ENCODE measurements at regions of chr12 and their contacts with region 1.

Region 1: GRCh38 chr12:114636723-114637483 is 47.1 kb downstream of the TBX3 start:
- DNase-seq: peak in 32 of 42 donors; percentile 7 to 62 (median 28)

Region 2: DNA sequence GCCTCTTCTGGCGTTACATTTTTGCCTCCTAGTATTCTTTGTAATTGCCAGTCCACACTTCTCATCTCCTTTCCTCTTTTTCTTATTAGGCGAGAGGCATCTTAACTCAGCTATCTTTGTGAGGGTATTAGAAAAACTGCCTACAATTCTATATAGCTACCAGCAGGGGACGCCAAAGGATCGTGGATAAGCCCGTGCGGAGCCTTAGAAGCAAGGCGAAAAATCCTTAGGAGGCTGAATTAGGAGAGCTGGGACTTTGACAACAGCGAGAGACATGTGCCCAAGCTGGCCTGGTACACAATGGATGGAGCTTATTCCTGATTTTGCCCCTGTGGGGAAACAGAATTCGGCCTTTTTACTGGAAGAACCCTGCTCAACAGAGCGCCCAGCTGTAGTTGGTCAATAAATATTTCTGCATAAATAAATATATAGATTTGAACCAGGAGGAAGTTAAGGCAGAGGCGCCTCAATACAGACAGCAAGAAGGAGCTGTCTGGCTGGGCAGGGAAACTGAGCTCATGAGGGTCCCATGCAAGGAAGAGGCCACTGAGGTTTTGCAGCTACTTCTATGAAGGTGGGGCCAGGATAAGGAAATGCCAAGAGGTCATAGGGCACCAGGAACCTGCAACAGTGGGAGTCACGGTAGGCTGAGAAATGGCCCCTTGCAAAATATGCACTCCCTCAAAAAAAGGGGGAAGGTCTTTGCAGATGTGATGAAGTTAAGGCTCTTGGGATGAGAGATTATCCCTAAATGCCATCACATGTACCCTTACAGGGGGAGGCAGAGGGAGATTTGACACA is 656.2 kb before region 1 on chr12:
- intact Hi-C with region 1: loop called (anchors 5 kb)
- DNase-seq: peak in 40 of 42 donors; percentile 7 to 87 (median 62)

Region 3: GRCh38 chr12:114562654-114563053 is 74.2 kb before region 1 on chr12:
- intact Hi-C with region 1: no loop called
- DNase-seq: no peak

Region 4: DNA sequence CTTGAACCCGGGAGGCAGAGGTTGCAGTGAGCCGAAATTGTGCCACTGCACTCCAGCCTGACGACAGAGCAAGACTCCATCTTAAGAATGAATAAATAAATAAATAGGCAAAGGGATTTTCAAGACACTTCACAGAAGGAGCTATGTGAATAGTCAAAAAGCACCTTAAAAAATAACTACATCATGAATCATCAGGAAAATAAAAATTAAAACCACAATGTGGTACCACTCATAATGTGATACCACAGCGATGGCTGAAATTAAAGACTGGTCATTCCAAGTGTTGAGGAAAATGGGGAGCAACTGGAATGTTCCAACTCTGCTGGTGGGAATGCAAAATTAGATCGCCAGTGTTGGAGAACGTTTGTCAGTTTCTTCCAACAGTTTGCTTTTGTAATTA is 140.1 kb after region 1 on chr12:
- intact Hi-C with region 1: no loop called
- DNase-seq: no peak